A549 (cell line): ENCODE measurements at regions of chr1 and their contacts with region 1.

Region 1: GRCh38 chr1:179121159-179121938 is 39.5 kb downstream of the TOR3A start:
- DNase-seq: peak; percentile 40 to 64
- ATAC-seq: peak; percentile 75 to 79; a peak in 5 of 6 replicates
- H3K4me3 ChIP-seq: no peak overlapping the region
- H3K27ac ChIP-seq: peak overlapping the region in 1 of 2 experiments; percentile 53; a peak in 3 of 6 replicates
- H3K4me1 ChIP-seq: peaks cover 19% of the 10 kb centered on the region
- CTCF ChIP-seq: peak; percentile 93
- EP300 ChIP-seq: no peak
- POLR2A ChIP-seq: no peak
- RAD21 ChIP-seq: peak; percentile 83 to 88

Region 2: DNA sequence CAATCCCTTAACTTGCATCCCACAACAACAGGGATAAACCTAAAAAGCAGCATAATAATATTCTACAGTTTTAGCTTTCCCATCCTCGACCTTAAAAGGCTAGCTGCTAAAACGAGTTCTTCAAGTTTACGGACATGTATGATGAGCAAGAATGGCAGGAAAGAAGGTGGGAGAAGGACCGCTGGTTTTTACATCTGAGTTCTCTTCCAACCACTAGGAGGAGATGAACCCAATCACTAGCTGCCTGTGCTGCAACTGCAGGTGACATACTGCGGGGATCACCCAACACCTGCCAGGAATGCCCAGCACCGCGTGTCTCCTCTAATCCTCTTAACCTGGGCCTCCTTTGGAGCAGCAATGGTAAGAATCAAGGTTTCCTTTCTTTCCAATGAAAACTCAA is 16.0 kb before region 1 on chr1:
- CTCF ChIA-PET with region 1: interaction called, 27 read pairs
- POLR2A ChIA-PET with region 1: no interaction called
- DNase-seq: peak; percentile 55
- ATAC-seq: peak; percentile 62 to 76
- H3K4me3 ChIP-seq: no peak overlapping the region
- H3K27ac ChIP-seq: no peak overlapping the region
- H3K4me1 ChIP-seq: no peaks in the 10 kb centered on the region
- CTCF ChIP-seq: peak; percentile 29; the same call in 1 of the 3 replicates
- EP300 ChIP-seq: no peak
- POLR2A ChIP-seq: no peak
- RAD21 ChIP-seq: peak in 1 of 2 experiments; percentile 54; a peak in 2 of 5 replicates

Region 3: DNA sequence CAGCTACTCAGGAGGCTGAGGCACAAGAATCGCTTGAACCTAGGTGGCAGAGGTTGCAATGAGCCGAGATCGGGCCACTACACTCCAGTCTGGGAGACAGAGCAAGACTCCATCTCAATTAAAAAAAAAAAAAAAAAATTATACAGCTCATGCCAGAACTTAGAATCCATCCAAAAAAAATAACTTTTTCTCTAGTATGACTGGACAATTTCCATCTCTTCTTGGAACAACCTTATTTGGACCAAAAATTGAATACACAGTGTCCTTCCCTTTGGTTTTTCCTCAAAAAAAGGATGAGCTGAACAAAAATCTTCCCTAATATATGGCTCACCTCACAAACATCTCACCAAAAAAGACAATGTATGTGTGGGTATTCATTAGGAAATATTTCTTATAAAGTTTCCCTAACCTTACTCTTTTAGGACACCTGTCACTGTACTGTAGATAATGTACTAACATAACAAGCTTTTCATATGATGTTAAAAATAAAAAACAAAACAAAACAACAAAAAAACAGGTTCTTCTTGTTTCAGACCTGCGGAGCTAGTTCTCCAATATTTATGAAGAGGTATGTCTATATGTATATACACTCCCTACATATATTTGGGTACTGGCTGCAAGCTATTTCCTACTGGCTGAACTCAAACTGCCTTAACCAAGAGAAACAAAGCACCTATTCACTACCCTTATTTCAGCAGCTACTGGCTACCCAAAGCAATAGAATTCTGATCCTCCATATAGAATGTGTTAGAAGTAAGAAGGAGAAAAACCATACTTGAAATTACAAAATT is 34.5 kb after region 1 on chr1:
- CTCF ChIA-PET with region 1: interaction called, 10 read pairs
- POLR2A ChIA-PET with region 1: no interaction called
- DNase-seq: no peak
- ATAC-seq: no peak
- H3K4me3 ChIP-seq: no peak overlapping the region
- H3K27ac ChIP-seq: no peak overlapping the region
- H3K4me1 ChIP-seq: peaks cover 33% of the 10 kb centered on the region
- CTCF ChIP-seq: no peak
- EP300 ChIP-seq: no peak
- POLR2A ChIP-seq: no peak
- RAD21 ChIP-seq: no peak

Region 4: GRCh38 chr1:179183857-179184256 is 62.5 kb after region 1 on chr1:
- CTCF ChIA-PET with region 1: interaction called, 22 read pairs
- POLR2A ChIA-PET with region 1: no interaction called
- DNase-seq: no peak
- ATAC-seq: no peak
- H3K4me3 ChIP-seq: no peak overlapping the region
- H3K27ac ChIP-seq: no peak overlapping the region
- H3K4me1 ChIP-seq: peaks cover 8% of the 10 kb centered on the region
- CTCF ChIP-seq: no peak
- EP300 ChIP-seq: no peak
- POLR2A ChIP-seq: no peak
- RAD21 ChIP-seq: no peak

Region 5: DNA sequence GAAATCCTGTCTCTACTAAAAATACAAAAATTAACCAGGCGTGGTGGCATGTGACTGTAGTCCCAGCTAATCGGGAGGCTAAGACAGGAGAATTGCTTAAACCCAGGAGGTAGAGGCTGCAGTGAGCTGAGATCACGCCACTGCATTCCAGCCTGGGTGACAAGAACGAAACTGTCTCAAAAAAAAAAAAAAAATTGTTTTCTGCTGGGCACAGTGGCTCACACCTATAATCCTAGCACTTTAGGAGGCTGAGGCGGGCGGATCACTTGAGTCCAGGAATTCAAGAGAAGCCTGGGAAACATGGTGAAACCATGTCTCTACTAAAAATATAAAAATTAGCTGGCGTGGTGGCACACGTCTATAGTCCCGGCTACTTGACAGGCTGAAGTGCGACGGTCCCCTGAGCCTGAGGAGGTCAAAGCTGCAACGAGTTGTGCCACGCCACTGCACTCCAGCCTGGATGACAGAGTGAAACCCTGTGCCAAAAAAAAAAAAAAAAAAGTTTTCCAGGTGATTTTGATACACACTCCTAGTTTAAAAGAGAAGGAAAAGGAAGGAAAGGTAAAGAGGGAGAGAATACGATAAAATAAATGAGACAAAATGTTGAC is 76.4 kb after region 1 on chr1:
- CTCF ChIA-PET with region 1: interaction called, 32 read pairs
- POLR2A ChIA-PET with region 1: no interaction called
- DNase-seq: no peak
- ATAC-seq: no peak
- H3K4me3 ChIP-seq: no peak overlapping the region
- H3K27ac ChIP-seq: no peak overlapping the region
- H3K4me1 ChIP-seq: peaks cover 13% of the 10 kb centered on the region
- CTCF ChIP-seq: no peak
- EP300 ChIP-seq: no peak
- POLR2A ChIP-seq: no peak
- RAD21 ChIP-seq: no peak

Region 6: GRCh38 chr1:179234863-179235262 is 113.5 kb after region 1 on chr1:
- CTCF ChIA-PET with region 1: interaction called, 12 read pairs
- POLR2A ChIA-PET with region 1: no interaction called
- DNase-seq: no peak
- ATAC-seq: no peak
- H3K4me3 ChIP-seq: no peak overlapping the region
- H3K27ac ChIP-seq: peak overlapping the region; percentile 38 to 72; a peak in 5 of 6 replicates
- H3K4me1 ChIP-seq: peaks cover 52% of the 10 kb centered on the region
- CTCF ChIP-seq: no peak
- EP300 ChIP-seq: no peak
- POLR2A ChIP-seq: no peak
- RAD21 ChIP-seq: no peak

Region 7: GRCh38 chr1:179476484-179476883 is 355.1 kb after region 1 on chr1:
- CTCF ChIA-PET with region 1: no interaction called
- POLR2A ChIA-PET with region 1: no interaction called
- DNase-seq: no peak
- ATAC-seq: no peak
- H3K4me3 ChIP-seq: no peak overlapping the region
- H3K27ac ChIP-seq: no peak overlapping the region
- H3K4me1 ChIP-seq: no peaks in the 10 kb centered on the region
- CTCF ChIP-seq: no peak
- EP300 ChIP-seq: no peak
- POLR2A ChIP-seq: no peak
- RAD21 ChIP-seq: no peak